Right ventricle myocardium inferior (tissue), 1 donor: ENCODE measurements at regions of chr6 and their contacts with region 1.

Region 1: GRCh38 chr6:158819213-158819909 is at the start of gene EZR:
- DNase-seq: peak; percentile 87
- ATAC-seq: peak; percentile 81
- total RNA-seq, gene EZR: 203 TPM

Region 2: DNA sequence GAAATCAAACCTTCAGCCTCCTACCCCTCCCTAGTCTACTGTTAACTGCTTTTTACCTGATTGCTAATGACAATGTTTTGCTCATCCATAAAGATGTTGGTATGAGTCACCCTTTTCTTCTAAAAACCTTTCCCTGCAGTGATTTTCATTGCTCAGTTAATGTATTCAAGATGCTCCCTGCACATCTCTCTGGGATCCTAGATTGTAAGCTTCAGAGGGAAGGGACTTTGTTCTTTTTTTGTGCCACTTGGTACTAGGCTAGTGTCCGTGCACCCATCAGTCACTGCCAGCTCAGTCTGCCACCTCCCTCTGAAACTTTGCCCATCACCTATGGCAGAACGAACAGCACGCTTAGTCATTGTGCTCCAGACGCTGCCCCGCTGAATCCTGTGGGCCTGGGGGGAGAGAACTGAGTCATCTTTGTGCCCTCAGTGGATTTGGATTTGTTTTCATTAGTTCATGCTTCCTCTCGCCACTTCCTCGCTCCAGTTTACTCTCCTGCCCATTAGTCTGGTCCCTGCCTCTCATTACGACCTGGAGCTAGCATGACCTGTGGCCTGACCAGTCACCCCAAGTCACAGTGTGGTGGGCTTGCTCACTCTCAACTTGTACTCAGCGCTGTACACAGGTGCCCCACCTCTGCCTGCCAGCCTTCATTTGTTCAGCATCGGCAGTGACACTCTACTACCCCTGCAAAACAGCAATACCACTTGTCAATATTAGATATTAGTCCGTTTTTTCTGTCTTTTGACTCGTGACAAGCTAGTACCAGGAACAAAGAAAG is 337.5 kb before region 1 on chr6:
- intact Hi-C with region 1: no loop called
- DNase-seq: no peak
- ATAC-seq: no peak

Region 3: DNA sequence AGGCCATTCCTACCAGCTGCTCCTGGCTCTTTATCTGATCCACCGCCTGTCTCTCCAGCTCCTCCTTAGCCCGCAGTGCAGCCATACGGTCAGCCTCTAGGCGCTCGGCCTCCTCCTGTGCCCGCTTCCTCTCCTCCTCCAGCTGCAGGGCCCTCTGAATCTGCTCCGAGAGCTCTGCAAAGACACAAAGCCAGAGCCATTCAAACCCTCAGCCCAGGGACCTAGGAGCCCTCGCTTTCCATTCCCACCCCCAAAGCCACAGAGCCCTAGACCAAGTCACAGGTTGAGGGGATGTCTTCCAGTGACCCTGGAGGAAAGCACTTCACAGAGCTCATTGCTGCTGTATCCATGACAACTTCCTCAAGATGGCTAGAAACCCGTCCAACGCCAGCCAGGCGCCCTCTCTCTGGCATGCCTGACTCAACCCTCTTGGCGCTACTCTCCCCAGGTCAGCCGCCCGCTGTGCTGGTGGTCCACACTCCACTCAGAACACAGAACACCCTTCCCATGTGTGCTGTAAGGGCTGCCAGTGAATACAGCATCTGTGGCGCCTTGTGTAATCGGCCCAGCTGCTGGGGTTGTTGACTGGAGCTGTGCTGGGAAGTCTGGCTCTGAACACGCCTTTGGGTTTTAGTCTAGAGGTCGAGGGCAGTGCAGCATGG is 49.5 kb before region 1 on chr6:
- intact Hi-C with region 1: loop called (anchors 5 kb)
- DNase-seq: peak; percentile 81
- ATAC-seq: peak; percentile 78

Region 4: GRCh38 chr6:158869826-158870648 is 50.7 kb after region 1 on chr6:
- intact Hi-C with region 1: loop called (anchors 5 kb)
- DNase-seq: no peak
- ATAC-seq: no peak